OCI-LY7 (cell line): ENCODE measurements at regions of chr1 and their contacts with region 1.

Region 1: GRCh38 chr1:189859385-189859977 is 618.2 kb downstream of the BRINP3 start:
- DNase-seq: peak; percentile 43
- H3K4me3 ChIP-seq: no peak overlapping the region
- H3K27ac ChIP-seq: no peak overlapping the region
- H3K4me1 ChIP-seq: no peaks in the 10 kb centered on the region
- CTCF ChIP-seq: peak; percentile 92

Region 2: DNA sequence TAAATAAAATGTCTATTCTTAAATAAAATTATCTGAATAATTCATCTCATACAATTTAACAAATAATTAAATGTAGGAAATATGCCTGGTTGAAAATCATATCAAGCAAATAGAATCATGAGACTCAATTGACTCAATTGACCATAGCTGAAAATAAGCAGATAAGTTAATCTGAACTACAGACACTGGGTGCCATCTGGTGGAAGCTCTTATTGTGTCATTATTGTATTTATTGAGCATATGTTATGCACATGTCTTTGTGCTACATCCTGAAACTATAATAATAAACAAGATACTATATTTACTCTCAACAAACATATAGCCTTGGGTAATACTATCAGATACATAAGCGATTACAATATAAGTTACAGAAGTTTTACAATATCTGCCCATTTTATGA is 577.1 kb after region 1 on chr1:
- CTCF ChIA-PET with region 1: no interaction called
- POLR2A ChIA-PET with region 1: no interaction called
- intact Hi-C with region 1: loop called (anchors 2 kb)
- DNase-seq: peak; percentile 38
- H3K4me3 ChIP-seq: no peak overlapping the region
- H3K27ac ChIP-seq: no peak overlapping the region
- H3K4me1 ChIP-seq: no peaks in the 10 kb centered on the region
- CTCF ChIP-seq: peak; percentile 71